ENCODE measurements at regions of chr9 and their contacts with region 1.

Region 1: DNA sequence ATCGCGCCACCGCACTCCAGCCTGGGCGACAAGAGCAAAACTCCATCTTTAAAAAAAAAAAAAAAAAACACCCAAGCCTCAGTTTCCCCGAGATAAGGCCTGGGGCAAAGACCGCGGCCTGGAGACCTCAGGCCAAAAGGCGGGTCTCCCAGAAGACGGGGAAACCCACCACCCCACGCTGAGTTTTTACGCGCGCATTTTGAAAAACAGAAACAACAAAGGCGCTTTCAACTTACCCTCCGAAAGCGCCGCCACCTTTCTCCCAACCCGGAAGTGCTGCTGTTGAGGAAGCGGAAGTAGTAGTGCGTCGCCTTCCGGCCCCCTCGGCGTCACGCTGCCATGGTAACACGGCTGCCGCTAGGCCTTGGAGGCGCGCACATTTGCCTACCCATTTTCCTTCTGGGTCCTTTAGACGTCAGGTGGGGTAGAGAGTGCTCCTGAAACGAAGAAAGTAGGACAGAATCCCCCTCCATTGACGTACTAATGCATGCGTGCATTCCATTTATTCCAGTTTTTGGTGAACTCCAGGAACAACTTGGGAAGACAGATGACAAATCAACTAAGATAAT is at the start of gene TTF1:
- DNase-seq: peak; percentile 83
- ATAC-seq: peak; percentile 71
- H3K4me3 ChIP-seq: peak within 1 kb of the TSS; percentile 92 to 94
- H3K27ac ChIP-seq: peak within 1 kb of the TSS; percentile 34; the same call in 1 of the 2 replicates
- H3K4me1 ChIP-seq: peaks cover 22 to 36% of the 10 kb centered on the region in 2 experiments
- H3K27me3 ChIP-seq: no peaks in the 10 kb centered on the region
- CTCF ChIP-seq: no peak
- POLR2A ChIP-seq: no peak
- RAD21 ChIP-seq: no peak
- total RNA-seq, gene TTF1: 14.5 TPM

Region 2: GRCh38 chr9:132507746-132508469 is 101.3 kb after region 1 on chr9:
- CTCF ChIA-PET with region 1: no interaction called
- POLR2A ChIA-PET with region 1: no interaction called
- RAD21 ChIA-PET with region 1: interaction called in 1 of 2 experiments, 4 read pairs
- intact Hi-C with region 1: loop called (anchors 2 kb)
- DNase-seq: peak; percentile 37
- ATAC-seq: peak; percentile 96
- H3K4me3 ChIP-seq: no peak overlapping the region
- H3K27ac ChIP-seq: no peak overlapping the region
- H3K4me1 ChIP-seq: no peaks in the 10 kb centered on the region
- H3K27me3 ChIP-seq: no peaks in the 10 kb centered on the region; the same call in 1 of the 2 replicates
- CTCF ChIP-seq: peak; percentile 83 to 84 (median 84); a peak in 5 of 6 replicates
- POLR2A ChIP-seq: no peak
- RAD21 ChIP-seq: peak; percentile 82

Region 3: DNA sequence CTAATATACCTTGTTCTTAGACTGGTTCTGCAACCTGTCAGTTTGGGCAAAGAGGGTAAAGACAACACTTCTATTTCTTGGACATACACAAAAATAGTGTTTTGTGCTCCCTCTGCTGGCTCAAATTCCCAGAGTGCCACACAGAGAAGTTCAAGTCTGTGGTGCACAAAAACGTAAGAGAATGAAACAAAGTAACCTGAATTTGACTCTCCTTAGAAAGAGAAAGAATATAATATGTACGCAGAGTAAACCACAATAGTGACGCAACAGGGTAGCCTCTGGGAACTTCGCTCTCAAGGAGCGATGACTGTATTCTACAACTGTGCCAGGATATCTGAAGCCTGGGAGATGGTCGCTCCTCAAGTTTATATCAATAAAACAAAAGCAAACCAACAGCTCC is 244.6 kb after region 1 on chr9:
- CTCF ChIA-PET with region 1: no interaction called
- POLR2A ChIA-PET with region 1: no interaction called
- RAD21 ChIA-PET with region 1: no interaction called
- intact Hi-C with region 1: loop called (anchors 2 kb)
- DNase-seq: no peak
- ATAC-seq: peak; percentile 44; the same call in 1 of the 2 replicates
- H3K4me3 ChIP-seq: no peak overlapping the region
- H3K27ac ChIP-seq: no peak overlapping the region
- H3K4me1 ChIP-seq: no peaks in the 10 kb centered on the region
- H3K27me3 ChIP-seq: no peaks in the 10 kb centered on the region
- CTCF ChIP-seq: peak; percentile 22 to 52 (median 52); a peak in 4 of 6 replicates
- POLR2A ChIP-seq: no peak
- RAD21 ChIP-seq: 0 out of 2 replicates have a peak, but pooled peaks have one; percentile 23

Region 4: DNA sequence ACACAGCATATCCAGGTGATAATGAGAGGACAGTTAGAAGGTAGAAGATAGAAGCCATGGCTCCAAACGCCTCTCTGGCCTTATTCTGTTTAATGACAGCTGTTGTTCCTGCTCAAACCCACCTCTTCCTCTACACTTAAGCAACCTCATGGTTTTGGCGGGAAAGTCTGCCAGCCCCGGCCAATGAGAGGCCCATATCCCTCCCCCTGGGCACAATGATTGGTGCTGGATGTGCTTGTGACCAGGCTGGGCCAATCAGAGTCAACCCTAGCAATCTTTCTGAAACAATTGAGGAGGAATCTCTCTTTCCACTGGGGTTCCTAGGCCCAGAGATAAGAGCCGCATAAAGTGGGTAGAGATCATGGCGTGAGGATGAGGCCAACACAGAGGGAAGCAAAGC is 567.1 kb after region 1 on chr9:
- CTCF ChIA-PET with region 1: no interaction called
- POLR2A ChIA-PET with region 1: interaction called, 6 read pairs
- RAD21 ChIA-PET with region 1: no interaction called
- intact Hi-C with region 1: loop called (anchors 2 kb)
- DNase-seq: peak; percentile 8
- ATAC-seq: no peak
- H3K4me3 ChIP-seq: no peak overlapping the region
- H3K27ac ChIP-seq: no peak overlapping the region
- H3K4me1 ChIP-seq: peaks cover 0 to 11% of the 10 kb centered on the region in 2 experiments; a peak in 2 of 4 replicates
- H3K27me3 ChIP-seq: peaks cover 18% of the 10 kb centered on the region; the same call in 1 of the 2 replicates
- CTCF ChIP-seq: no peak
- POLR2A ChIP-seq: no peak
- RAD21 ChIP-seq: no peak